CD8-positive, alpha-beta T cell (primary cell): ENCODE measurements at regions of chr2 and their contacts with region 1.

Region 1: DNA sequence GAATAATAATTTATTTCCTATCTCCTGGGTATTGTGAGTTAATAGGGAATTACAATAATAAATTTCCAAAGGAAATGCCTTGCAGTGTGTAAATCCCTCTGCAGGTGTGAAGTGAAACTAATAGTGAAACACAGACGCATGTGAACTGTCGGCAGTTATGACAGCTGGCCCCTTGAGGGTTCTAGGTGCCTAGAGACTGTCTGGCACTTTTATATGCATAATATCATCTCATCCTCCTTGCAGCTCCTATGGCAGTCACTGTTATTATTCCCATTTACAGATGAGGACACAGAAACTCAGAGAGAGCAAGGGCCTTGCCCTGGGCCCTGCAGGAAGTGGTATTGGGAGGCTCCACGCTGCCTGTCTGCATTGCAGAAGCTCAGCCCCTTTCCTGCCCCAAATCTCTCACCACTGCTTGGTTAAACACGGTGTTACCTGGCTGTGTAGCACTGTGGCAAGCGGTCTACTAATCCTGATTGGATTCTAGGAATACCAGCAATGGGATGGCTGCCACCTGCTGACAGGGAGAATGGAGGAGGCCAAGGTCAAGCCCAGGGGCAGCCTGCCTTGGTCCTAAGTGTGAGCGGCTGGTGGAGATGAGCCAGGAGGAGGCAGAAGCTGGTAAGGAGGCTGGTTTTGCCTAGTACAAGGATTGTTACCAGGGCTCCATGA is 32.8 kb upstream of the ACKR3 start:
- DNase-seq: peak; percentile 17 to 81 (median 66)
- ATAC-seq: peak; percentile 94
- H3K4me3 ChIP-seq: peak overlapping the region; percentile 60 to 77
- H3K4me3 Mint-ChIP-seq: peak overlapping the region; percentile 98
- H3K27ac ChIP-seq: peak overlapping the region; percentile 66
- H3K27ac Mint-ChIP-seq: peak overlapping the region; percentile 98
- H3K4me1 ChIP-seq: peaks cover 37% of the 10 kb centered on the region
- H3K4me1 Mint-ChIP-seq: peaks cover 53% of the 10 kb centered on the region
- H3K27me3 ChIP-seq: no peaks in the 10 kb centered on the region
- H3K27me3 Mint-ChIP-seq: no peaks in the 10 kb centered on the region
- CTCF ChIP-seq: no peak

Region 2: GRCh38 chr2:235859651-235860050 is 677.2 kb before region 1 on chr2:
- CTCF ChIA-PET with region 1: no interaction called
- POLR2A ChIA-PET with region 1: no interaction called
- intact Hi-C with region 1: no loop called
- DNase-seq: no peak
- ATAC-seq: no peak
- H3K4me3 ChIP-seq: no peak overlapping the region
- H3K4me3 Mint-ChIP-seq: no peak overlapping the region
- H3K27ac ChIP-seq: no peak overlapping the region
- H3K27ac Mint-ChIP-seq: no peak overlapping the region
- H3K4me1 ChIP-seq: no peaks in the 10 kb centered on the region
- H3K4me1 Mint-ChIP-seq: no peaks in the 10 kb centered on the region
- H3K27me3 ChIP-seq: no peaks in the 10 kb centered on the region
- H3K27me3 Mint-ChIP-seq: peaks cover 11% of the 10 kb centered on the region
- CTCF ChIP-seq: no peak

Region 3: DNA sequence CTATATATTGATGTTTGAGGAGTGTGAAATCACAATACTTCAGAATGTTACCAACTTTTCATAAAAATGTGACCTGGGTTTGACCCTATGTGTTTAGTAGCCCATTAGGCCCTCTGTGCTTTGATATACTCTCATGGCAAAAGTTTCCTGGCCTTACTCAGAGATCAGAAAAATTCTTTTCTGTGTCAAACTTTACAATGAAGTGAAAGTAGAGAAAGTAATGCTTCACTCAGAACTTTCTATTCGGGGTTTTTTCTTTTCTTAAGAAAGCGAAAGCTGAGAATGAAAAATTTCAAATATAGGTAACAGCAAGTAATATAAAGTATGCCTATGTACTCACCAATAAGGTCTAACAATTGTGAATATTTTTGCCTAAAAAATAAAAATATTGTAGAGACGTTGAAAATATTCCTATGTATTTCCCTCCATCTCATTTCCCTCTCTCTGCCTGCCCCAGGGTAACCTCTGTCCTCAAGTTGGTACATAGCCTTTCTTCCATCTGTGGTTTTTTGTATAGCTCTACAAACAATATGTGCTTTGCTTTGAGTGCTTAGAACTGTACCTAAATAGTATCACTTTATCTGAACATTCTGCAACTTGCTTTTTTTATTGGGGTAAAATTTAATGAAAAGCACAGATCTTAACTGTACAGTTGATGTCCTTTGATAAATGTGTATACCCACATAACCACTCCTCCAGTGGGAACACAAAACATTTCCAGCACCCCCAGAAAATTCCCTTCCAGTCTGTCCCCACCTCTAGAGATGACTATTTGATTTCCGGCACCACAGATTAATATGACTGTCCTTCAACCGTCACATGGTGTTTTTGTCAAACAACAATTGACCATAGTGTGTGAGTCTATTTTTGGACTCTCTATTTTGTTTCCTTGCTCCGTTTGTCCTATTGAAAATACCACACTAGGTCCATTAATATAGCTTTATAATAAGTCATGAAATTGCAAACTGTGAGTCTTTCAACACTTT is 22.4 kb after region 1 on chr2:
- CTCF ChIA-PET with region 1: interaction called, 4 read pairs
- POLR2A ChIA-PET with region 1: interaction called, 8 read pairs
- intact Hi-C with region 1: loop called in 1 of 2 experiments (anchors 2 kb)
- DNase-seq: no peak
- ATAC-seq: no peak
- H3K4me3 ChIP-seq: no peak overlapping the region
- H3K4me3 Mint-ChIP-seq: no peak overlapping the region
- H3K27ac ChIP-seq: no peak overlapping the region
- H3K27ac Mint-ChIP-seq: peak overlapping the region; percentile 58
- H3K4me1 ChIP-seq: peaks cover 23% of the 10 kb centered on the region
- H3K4me1 Mint-ChIP-seq: peaks cover 51% of the 10 kb centered on the region
- H3K27me3 ChIP-seq: no peaks in the 10 kb centered on the region
- H3K27me3 Mint-ChIP-seq: no peaks in the 10 kb centered on the region
- CTCF ChIP-seq: no peak

Region 4: GRCh38 chr2:236824877-236825692 is 288.2 kb after region 1 on chr2:
- CTCF ChIA-PET with region 1: no interaction called
- POLR2A ChIA-PET with region 1: no interaction called
- intact Hi-C with region 1: no loop called
- DNase-seq: no peak
- ATAC-seq: no peak
- H3K4me3 ChIP-seq: no peak overlapping the region
- H3K4me3 Mint-ChIP-seq: no peak overlapping the region
- H3K27ac ChIP-seq: no peak overlapping the region
- H3K27ac Mint-ChIP-seq: no peak overlapping the region
- H3K4me1 ChIP-seq: no peaks in the 10 kb centered on the region
- H3K4me1 Mint-ChIP-seq: no peaks in the 10 kb centered on the region
- H3K27me3 ChIP-seq: no peaks in the 10 kb centered on the region
- H3K27me3 Mint-ChIP-seq: no peaks in the 10 kb centered on the region
- CTCF ChIP-seq: no peak

Region 5: GRCh38 chr2:236968101-236968879 is 431.4 kb after region 1 on chr2:
- CTCF ChIA-PET with region 1: no interaction called
- POLR2A ChIA-PET with region 1: no interaction called
- intact Hi-C with region 1: loop called in 1 of 2 experiments (anchors 10 kb)
- DNase-seq: peak in 8 of 9 experiments; percentile 40 to 88 (median 56)
- ATAC-seq: peak; percentile 92
- H3K4me3 ChIP-seq: peak overlapping the region in 1 of 2 experiments; percentile 34
- H3K4me3 Mint-ChIP-seq: peak overlapping the region; percentile 69
- H3K27ac ChIP-seq: peak overlapping the region; percentile 52 to 72
- H3K27ac Mint-ChIP-seq: peak overlapping the region; percentile 95
- H3K4me1 ChIP-seq: peaks cover 37% of the 10 kb centered on the region
- H3K4me1 Mint-ChIP-seq: peaks cover 48% of the 10 kb centered on the region
- H3K27me3 ChIP-seq: no peaks in the 10 kb centered on the region
- H3K27me3 Mint-ChIP-seq: no peaks in the 10 kb centered on the region
- CTCF ChIP-seq: no peak